MCF 10A (cell line): ENCODE measurements at regions of chr4 and their contacts with region 1.

Region 1: GRCh38 chr4:100206850-100207249 is 16.6 kb upstream of the DDIT4L start:
- DNase-seq: no peak
- H3K4me3 Mint-ChIP-seq: no peak overlapping the region
- H3K27ac Mint-ChIP-seq: no peak overlapping the region
- H3K4me1 Mint-ChIP-seq: no peaks in the 10 kb centered on the region
- H3K27me3 Mint-ChIP-seq: no peaks in the 10 kb centered on the region
- CTCF ChIP-seq: no peak

Region 2: GRCh38 chr4:100257567-100257966 is 50.7 kb after region 1 on chr4:
- CTCF ChIA-PET with region 1: no interaction called
- POLR2A ChIA-PET with region 1: no interaction called
- intact Hi-C with region 1: no loop called
- DNase-seq: no peak
- H3K4me3 Mint-ChIP-seq: no peak overlapping the region
- H3K27ac Mint-ChIP-seq: no peak overlapping the region
- H3K4me1 Mint-ChIP-seq: no peaks in the 10 kb centered on the region
- H3K27me3 Mint-ChIP-seq: no peaks in the 10 kb centered on the region
- CTCF ChIP-seq: no peak

Region 3: GRCh38 chr4:100707786-100708185 is 500.9 kb after region 1 on chr4:
- CTCF ChIA-PET with region 1: interaction called, 10 read pairs
- POLR2A ChIA-PET with region 1: no interaction called
- intact Hi-C with region 1: no loop called
- DNase-seq: no peak
- H3K4me3 Mint-ChIP-seq: no peak overlapping the region
- H3K27ac Mint-ChIP-seq: no peak overlapping the region
- H3K4me1 Mint-ChIP-seq: peaks cover 11% of the 10 kb centered on the region
- H3K27me3 Mint-ChIP-seq: no peaks in the 10 kb centered on the region
- CTCF ChIP-seq: no peak